Mammary epithelial cell (primary cell): ENCODE measurements at regions of chr4 and their contacts with region 1.

Region 1: GRCh38 chr4:123495530-123495929 is 98.9 kb downstream of the SPRY1 start:
- DNase-seq: peak; percentile 69
- H3K4me3 ChIP-seq: no peak overlapping the region
- H3K27ac ChIP-seq: no peak overlapping the region
- H3K4me1 ChIP-seq: no peaks in the 10 kb centered on the region
- H3K27me3 ChIP-seq: no peaks in the 10 kb centered on the region
- CTCF ChIP-seq: no peak

Region 2: DNA sequence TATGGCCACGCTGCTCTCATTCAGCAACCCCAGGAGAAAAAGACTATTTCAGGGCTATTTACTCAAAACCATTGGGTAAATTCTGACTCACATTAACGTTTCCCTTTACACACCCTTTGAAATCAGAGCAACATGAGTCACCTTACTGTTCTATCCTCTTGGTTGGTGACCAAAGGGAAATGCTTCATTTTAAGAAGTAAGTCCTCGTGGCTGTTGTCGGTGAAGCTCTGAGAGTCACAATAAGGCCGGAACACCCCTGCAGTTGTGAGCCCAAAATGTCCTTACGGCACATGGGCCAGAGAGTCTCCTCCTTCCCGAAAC is 155.2 kb before region 1 on chr4:
- CTCF ChIA-PET with region 1: no interaction called
- dilution Hi-C with region 1: no loop called
- in situ Hi-C with region 1: no loop called
- intact Hi-C with region 1: no loop called
- DNase-seq: peak; percentile 87
- H3K4me3 ChIP-seq: no peak overlapping the region
- H3K27ac ChIP-seq: peak overlapping the region; percentile 9
- H3K4me1 ChIP-seq: peaks cover 11% of the 10 kb centered on the region
- H3K27me3 ChIP-seq: no peaks in the 10 kb centered on the region
- CTCF ChIP-seq: no peak

Region 3: GRCh38 chr4:123554801-123555232 is 59.3 kb after region 1 on chr4:
- CTCF ChIA-PET with region 1: no interaction called
- dilution Hi-C with region 1: loop called (anchors 5 kb)
- in situ Hi-C with region 1: no loop called
- intact Hi-C with region 1: no loop called
- DNase-seq: no peak
- H3K4me3 ChIP-seq: peak overlapping the region in 1 of 3 experiments; percentile 3
- H3K27ac ChIP-seq: peak overlapping the region; percentile 32
- H3K4me1 ChIP-seq: peaks cover 23% of the 10 kb centered on the region
- H3K27me3 ChIP-seq: no peaks in the 10 kb centered on the region
- CTCF ChIP-seq: no peak